WTC11 (cell line): ENCODE measurements at regions of chr6 and their contacts with region 1.

Region 1: DNA sequence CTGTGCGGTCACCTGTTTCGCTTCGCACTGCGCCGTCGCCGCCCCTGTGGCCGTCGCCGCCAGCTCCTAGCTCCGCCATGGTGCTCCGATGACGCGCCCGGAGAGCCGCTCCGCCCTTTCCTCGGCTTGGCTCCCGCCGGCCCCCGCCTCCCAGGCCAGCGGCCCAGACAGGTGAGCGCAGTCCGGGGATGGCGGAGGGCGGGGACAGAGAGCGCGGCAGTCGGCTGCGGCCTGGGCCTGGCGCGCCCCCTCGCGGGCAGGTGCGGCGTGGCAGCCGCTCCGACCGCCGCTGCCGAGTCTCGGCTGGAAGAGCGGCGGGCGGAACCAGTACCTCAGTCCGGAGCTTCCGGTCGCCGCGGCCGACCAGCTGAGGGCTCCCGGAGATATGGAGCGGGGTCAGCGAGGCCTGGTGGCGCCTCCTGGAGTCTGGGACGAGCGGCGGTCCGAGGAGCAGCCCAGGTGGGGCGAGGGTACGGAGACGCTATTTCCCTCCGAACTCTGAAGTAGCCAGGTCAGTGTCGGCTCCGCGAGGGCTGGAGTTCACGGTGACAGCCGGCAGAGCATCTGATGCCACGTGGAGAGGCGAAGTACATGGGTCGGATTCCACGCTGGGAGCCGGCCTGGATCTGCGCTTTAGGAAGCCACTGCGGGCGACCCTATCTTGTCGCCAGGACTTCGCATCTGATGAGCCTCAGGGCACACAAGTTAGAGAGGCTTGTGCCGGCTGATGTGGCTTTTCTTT is at the start of gene MAP7:
- DNase-seq: peak; percentile 95
- ATAC-seq: peak; percentile 89
- H3K4me3 Mint-ChIP-seq: peak within 1 kb of the TSS; percentile 73
- H3K27ac Mint-ChIP-seq: peak within 1 kb of the TSS; percentile 16; the same call in 1 of the 2 replicates
- H3K4me1 Mint-ChIP-seq: peaks cover 38% of the 10 kb centered on the region
- H3K27me3 Mint-ChIP-seq: peaks cover 38% of the 10 kb centered on the region
- CTCF ChIP-seq: peak; percentile 99
- total RNA-seq, gene MAP7: 56.6 to 60.5 TPM (median 59.1 TPM) in 3 replicates

Region 2: DNA sequence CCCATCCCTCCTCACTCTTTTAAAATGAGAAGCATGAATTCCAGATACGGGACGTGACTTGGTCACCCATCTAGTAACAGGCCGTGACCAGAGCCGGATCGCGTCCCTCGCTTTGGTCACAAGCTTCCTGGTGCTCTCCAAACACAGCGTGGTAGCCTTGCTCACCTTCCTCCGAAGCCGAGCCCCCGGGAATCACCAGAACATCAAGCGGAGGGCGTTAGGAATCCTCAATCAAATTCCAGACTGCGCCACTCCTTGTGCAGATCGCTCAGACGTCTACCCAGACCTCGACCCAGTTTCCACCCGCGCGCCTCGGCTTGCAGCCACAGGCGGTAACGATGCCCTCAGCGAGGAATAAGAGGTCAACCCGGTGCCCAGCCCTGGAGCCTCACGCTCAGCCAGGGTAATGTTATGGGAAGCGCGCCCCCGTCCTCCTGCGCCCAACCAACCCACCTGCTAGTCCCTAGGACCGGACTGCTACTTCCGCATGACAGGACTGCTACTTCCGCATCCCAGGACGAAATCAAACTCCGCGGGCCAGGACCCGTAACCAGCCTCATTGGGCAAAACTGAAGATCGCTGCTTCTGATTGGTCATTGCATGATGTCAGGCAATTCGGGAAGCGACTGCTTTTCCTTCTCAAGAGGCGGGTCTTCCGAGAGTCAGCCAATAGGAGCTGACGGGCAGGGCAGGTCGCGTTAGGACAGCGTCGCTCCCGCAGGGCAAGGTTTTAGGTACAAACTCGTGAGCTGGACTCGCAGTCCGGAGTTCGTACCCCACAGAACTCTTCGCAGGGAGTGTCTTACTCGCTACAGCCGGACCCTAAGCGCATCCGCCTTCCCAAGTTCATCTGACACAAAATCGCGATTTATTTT is 300.5 kb before region 1 on chr6 and contains the start of gene MTFR2:
- CTCF ChIA-PET with region 1: interaction called, 13 read pairs
- POLR2A ChIA-PET with region 1: interaction called, 13 read pairs
- DNase-seq: peak; percentile 91
- ATAC-seq: peak; percentile 94
- H3K4me3 Mint-ChIP-seq: peak within 1 kb of the TSS; percentile 97
- H3K27ac Mint-ChIP-seq: peak within 1 kb of the TSS; percentile 92
- H3K4me1 Mint-ChIP-seq: peaks cover 17% of the 10 kb centered on the region
- H3K27me3 Mint-ChIP-seq: no peaks in the 10 kb centered on the region
- CTCF ChIP-seq: no peak
- total RNA-seq, gene MTFR2: 8.2 to 8.5 TPM (median 8.5 TPM) in 3 replicates

Region 3: GRCh38 chr6:136317021-136317694 is 233.3 kb before region 1 on chr6:
- CTCF ChIA-PET with region 1: interaction called, 10 read pairs
- POLR2A ChIA-PET with region 1: no interaction called
- DNase-seq: peak; percentile 60
- ATAC-seq: peak; percentile 97
- H3K4me3 Mint-ChIP-seq: no peak overlapping the region
- H3K27ac Mint-ChIP-seq: no peak overlapping the region
- H3K4me1 Mint-ChIP-seq: no peaks in the 10 kb centered on the region
- H3K27me3 Mint-ChIP-seq: no peaks in the 10 kb centered on the region; the same call in 1 of the 2 replicates
- CTCF ChIP-seq: peak; percentile 40

Region 4: GRCh38 chr6:136378886-136379285 is 171.6 kb before region 1 on chr6:
- CTCF ChIA-PET with region 1: interaction called, 17 read pairs
- POLR2A ChIA-PET with region 1: no interaction called
- DNase-seq: no peak
- ATAC-seq: no peak
- H3K4me3 Mint-ChIP-seq: no peak overlapping the region
- H3K27ac Mint-ChIP-seq: no peak overlapping the region
- H3K4me1 Mint-ChIP-seq: peaks cover 11% of the 10 kb centered on the region
- H3K27me3 Mint-ChIP-seq: no peaks in the 10 kb centered on the region
- CTCF ChIP-seq: no peak

Region 5: GRCh38 chr6:136532030-136532429 is 18.5 kb before region 1 on chr6:
- CTCF ChIA-PET with region 1: interaction called, 70 read pairs
- POLR2A ChIA-PET with region 1: no interaction called
- DNase-seq: no peak
- ATAC-seq: no peak
- H3K4me3 Mint-ChIP-seq: no peak overlapping the region
- H3K27ac Mint-ChIP-seq: no peak overlapping the region
- H3K4me1 Mint-ChIP-seq: peaks cover 77% of the 10 kb centered on the region
- H3K27me3 Mint-ChIP-seq: no peaks in the 10 kb centered on the region
- CTCF ChIP-seq: no peak

Region 6: DNA sequence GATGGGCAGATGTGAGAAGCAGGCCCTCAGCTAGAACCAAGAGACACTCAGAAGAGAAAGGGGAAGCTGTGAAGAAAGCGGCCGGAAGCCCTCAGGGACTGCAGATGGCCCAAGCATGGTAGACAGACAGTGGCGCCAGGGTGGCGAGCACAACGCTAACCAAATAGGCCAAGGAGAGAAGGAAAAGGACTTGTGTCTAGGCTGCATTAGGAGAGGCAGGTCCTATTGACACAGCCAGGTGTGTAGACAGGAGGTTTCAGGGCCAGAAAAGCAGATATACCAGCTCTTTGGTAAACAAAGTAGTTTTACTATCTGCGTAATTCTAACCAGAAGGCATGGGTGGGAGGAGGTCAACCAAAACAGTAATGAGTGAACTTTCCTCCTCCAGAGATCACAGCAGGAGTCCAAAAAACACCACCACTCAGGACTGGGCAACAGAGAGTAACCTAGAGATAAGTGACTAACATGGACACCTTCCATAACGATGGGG is 15.6 kb after region 1 on chr6:
- CTCF ChIA-PET with region 1: interaction called, 14 read pairs
- POLR2A ChIA-PET with region 1: no interaction called
- DNase-seq: no peak
- ATAC-seq: no peak
- H3K4me3 Mint-ChIP-seq: no peak overlapping the region
- H3K27ac Mint-ChIP-seq: no peak overlapping the region
- H3K4me1 Mint-ChIP-seq: peaks cover 3% of the 10 kb centered on the region; the same call in 1 of the 2 replicates
- H3K27me3 Mint-ChIP-seq: no peaks in the 10 kb centered on the region
- CTCF ChIP-seq: no peak

Region 7: GRCh38 chr6:136737871-136738691 is 187.6 kb after region 1 on chr6:
- CTCF ChIA-PET with region 1: no interaction called
- POLR2A ChIA-PET with region 1: no interaction called
- DNase-seq: no peak
- ATAC-seq: no peak
- H3K4me3 Mint-ChIP-seq: no peak overlapping the region
- H3K27ac Mint-ChIP-seq: no peak overlapping the region
- H3K4me1 Mint-ChIP-seq: peaks cover 8% of the 10 kb centered on the region
- H3K27me3 Mint-ChIP-seq: no peaks in the 10 kb centered on the region
- CTCF ChIP-seq: no peak